ENCODE measurements at regions of chr3 and their contacts with region 1.

Region 1: DNA sequence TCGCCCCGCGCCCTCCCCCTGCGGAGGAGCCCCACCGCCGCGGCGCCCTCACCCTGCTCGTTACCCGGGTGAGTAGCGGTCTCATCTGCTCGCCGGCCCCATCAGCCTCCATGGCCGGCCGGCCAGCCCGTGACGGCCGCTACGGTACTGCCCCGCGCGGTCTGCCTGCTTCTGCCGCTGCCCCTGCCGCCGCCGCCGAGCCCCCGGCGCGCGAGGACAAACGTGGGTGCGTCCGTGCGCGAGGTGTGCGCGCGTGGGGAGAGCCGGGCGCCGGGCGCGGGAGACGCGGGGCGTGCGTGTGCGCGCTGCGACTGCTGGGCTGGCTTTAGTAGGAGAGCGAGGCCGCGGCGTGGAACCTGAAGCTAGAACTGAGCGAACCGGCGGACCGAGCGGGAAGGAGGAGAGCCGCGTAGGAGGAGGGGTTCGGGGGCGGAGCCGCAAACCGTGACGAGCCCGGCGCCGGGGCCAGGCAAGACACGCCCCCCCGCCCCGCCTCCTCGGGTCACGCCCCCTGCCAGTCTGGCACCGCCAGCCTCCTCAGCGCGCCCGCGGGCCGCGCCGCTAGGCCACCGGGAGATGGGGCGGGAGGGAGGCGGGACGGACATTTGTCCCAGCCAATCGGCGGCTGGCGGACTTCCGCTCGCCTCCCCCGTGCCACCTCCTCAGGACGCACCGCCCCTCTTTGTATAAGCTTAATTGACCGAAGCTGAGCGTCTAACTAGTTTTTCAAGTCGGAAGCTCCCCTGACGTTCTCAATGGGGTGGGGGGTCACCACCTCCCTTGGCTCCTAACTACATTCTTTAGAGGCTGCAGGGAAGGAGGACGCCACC is at the start of gene SLC4A7:
- DNase-seq: peak; percentile 97 to 99 (median 98)
- H3K4me3 ChIP-seq: peak within 1 kb of the TSS; percentile 78 to 88
- H3K4me3 Mint-ChIP-seq: peak within 1 kb of the TSS; percentile 94 to 100 (median 99)
- H3K27ac ChIP-seq: peak within 1 kb of the TSS; percentile 83
- H3K27ac Mint-ChIP-seq: peak within 1 kb of the TSS; percentile 96 to 98 (median 97)
- H3K4me1 ChIP-seq: peaks cover 41% of the 10 kb centered on the region
- H3K4me1 Mint-ChIP-seq: peaks cover 28 to 48% (median 35%) of the 10 kb centered on the region in 4 donors
- H3K27me3 ChIP-seq: no peaks in the 10 kb centered on the region
- H3K27me3 Mint-ChIP-seq: no peaks in the 10 kb centered on the region
- total RNA-seq, gene SLC4A7: 98.5 to 103 TPM

Region 2: DNA sequence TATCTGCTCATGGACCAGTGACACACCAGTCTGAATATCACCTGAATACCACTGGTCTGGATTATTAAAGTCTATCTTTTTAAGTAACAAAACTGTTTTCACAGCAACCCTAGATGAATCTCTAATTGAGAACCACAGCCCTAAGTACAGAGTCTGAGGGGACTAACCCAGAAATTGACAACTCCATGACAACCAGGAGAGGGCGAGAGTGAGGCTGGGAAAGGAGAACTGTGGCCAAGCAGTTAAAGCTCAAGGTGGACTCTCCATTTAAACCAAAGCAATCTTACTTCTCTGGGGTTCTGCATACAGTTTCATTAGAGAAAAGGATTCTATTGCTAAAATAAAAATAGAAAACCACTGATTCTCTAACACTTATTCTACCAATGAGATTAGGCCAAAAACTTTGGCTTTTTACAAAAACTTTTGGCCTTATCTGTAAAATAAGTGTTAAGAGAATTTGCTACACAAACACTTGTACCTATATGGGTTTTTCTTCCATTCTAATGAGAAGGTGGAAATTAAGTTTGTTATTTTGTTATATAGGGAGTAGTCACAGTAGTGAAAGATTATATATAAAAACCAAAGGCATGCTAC is 126.5 kb before region 1 on chr3:
- CTCF ChIA-PET with region 1: interaction called, 4 read pairs
- POLR2A ChIA-PET with region 1: no interaction called
- intact Hi-C with region 1: loop called (anchors 5 kb)
- DNase-seq: peak; percentile 47 to 59 (median 53)
- H3K4me3 ChIP-seq: no peak overlapping the region
- H3K4me3 Mint-ChIP-seq: peak overlapping the region in 6 of 8 donors; percentile 14 to 74 (median 30)
- H3K27ac ChIP-seq: no peak overlapping the region
- H3K27ac Mint-ChIP-seq: peak overlapping the region in 1 of 7 donors; percentile 58
- H3K4me1 ChIP-seq: peaks cover 34% of the 10 kb centered on the region
- H3K4me1 Mint-ChIP-seq: peaks cover 28 to 60% (median 40%) of the 10 kb centered on the region in 4 donors
- H3K27me3 ChIP-seq: no peaks in the 10 kb centered on the region
- H3K27me3 Mint-ChIP-seq: no peaks in the 10 kb centered on the region

Region 3: DNA sequence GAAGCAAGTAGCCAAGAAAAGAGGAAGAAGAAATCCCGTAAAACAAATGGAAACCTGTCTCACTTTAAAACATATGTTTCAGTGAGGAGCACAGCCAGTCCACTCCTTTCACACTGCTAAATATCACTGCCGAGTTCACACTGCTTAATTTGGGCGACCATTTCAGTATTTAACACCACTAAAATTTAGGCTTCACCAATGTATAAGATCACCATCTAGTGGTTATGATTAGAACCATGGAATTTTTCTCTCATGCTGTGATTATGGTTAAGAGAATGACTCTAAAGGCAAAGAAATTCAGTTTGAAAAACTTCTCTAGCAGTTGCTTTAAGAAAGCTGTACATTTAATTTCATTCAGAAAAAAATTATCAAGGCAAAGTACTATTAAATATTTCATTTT is 16.7 kb before region 1 on chr3:
- CTCF ChIA-PET with region 1: interaction called, 45 read pairs
- POLR2A ChIA-PET with region 1: interaction called, 32 read pairs
- intact Hi-C with region 1: loop called (anchors 1 kb)
- DNase-seq: peak in 4 of 5 donors; percentile 41 to 49 (median 42)
- H3K4me3 ChIP-seq: no peak overlapping the region
- H3K4me3 Mint-ChIP-seq: peak overlapping the region in 3 of 8 donors; percentile 4 to 44 (median 39)
- H3K27ac ChIP-seq: no peak overlapping the region
- H3K27ac Mint-ChIP-seq: peak overlapping the region in 5 of 7 donors; percentile 6 to 63 (median 27)
- H3K4me1 ChIP-seq: peaks cover 30% of the 10 kb centered on the region
- H3K4me1 Mint-ChIP-seq: peaks cover 25 to 57% (median 35%) of the 10 kb centered on the region in 4 donors
- H3K27me3 ChIP-seq: no peaks in the 10 kb centered on the region
- H3K27me3 Mint-ChIP-seq: no peaks in the 10 kb centered on the region

Region 4: GRCh38 chr3:27632431-27633223 is 148.4 kb after region 1 on chr3:
- CTCF ChIA-PET with region 1: interaction called, 6 read pairs
- POLR2A ChIA-PET with region 1: interaction called, 27 read pairs
- intact Hi-C with region 1: loop called (anchors 2 kb)
- DNase-seq: peak; percentile 50 to 57 (median 53)
- H3K4me3 ChIP-seq: peak overlapping the region; percentile 8 to 64
- H3K4me3 Mint-ChIP-seq: peak overlapping the region; percentile 90 to 98 (median 94)
- H3K27ac ChIP-seq: peak overlapping the region; percentile 66
- H3K27ac Mint-ChIP-seq: peak overlapping the region; percentile 88 to 98 (median 96)
- H3K4me1 ChIP-seq: peaks cover 26% of the 10 kb centered on the region
- H3K4me1 Mint-ChIP-seq: peaks cover 27 to 45% (median 34%) of the 10 kb centered on the region in 4 donors
- H3K27me3 ChIP-seq: no peaks in the 10 kb centered on the region
- H3K27me3 Mint-ChIP-seq: no peaks in the 10 kb centered on the region

Region 5: DNA sequence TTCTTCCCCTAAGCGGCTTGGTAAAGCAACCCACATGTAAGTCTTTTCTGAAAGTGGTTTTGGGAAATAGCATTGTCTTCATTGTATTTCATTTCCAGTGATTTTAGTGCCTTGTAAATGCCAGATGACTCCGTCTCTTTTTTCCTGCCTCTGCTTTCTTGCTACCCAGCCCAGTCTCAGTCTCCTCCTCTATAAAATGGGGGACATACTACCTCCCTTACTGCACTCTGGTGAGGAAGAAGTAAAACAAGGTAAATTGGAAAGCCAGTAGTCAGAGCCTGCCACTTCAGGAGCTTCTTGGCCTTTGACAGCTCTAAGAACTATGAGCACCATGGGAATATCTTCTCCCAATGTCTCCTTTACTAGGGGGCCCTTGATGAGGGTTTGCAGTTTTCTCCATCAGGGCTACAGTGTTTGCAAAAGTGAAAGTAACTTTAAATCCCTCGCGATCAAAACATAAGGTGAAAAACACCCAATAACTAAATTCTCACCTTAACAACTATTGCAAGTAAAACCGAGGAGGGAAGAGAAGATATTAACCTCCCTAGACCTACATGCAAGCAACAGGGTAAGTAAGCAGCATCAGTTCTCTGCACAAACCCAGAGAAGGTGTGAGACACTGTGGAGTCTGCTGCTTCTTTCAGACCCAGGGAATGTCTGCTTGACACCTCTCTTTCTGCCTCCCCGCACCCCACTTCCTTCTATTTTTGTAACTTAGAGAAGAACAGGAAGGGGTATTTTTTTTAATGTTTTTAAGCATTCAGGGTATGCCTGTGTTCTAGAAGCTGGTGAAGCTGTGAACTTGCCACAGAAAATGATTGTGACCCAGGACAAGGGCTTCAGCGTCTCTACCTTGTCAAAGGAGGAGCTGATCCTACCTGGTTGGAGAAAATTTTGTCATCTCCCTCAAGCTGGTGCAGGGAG is 397.0 kb after region 1 on chr3:
- CTCF ChIA-PET with region 1: no interaction called
- POLR2A ChIA-PET with region 1: no interaction called
- intact Hi-C with region 1: loop called (anchors 5 kb)
- DNase-seq: peak; percentile 55 to 71 (median 63)
- H3K4me3 ChIP-seq: peak overlapping the region; percentile 42 to 57
- H3K4me3 Mint-ChIP-seq: peak overlapping the region; percentile 79 to 96 (median 90)
- H3K27ac ChIP-seq: peak overlapping the region; percentile 60
- H3K27ac Mint-ChIP-seq: peak overlapping the region; percentile 82 to 95 (median 93)
- H3K4me1 ChIP-seq: peaks cover 60% of the 10 kb centered on the region
- H3K4me1 Mint-ChIP-seq: peaks cover 45 to 67% (median 59%) of the 10 kb centered on the region in 4 donors
- H3K27me3 ChIP-seq: no peaks in the 10 kb centered on the region
- H3K27me3 Mint-ChIP-seq: no peaks in the 10 kb centered on the region